IMR-90 (cell line): ENCODE measurements at regions of chr10 and their contacts with region 1.

Region 1: DNA sequence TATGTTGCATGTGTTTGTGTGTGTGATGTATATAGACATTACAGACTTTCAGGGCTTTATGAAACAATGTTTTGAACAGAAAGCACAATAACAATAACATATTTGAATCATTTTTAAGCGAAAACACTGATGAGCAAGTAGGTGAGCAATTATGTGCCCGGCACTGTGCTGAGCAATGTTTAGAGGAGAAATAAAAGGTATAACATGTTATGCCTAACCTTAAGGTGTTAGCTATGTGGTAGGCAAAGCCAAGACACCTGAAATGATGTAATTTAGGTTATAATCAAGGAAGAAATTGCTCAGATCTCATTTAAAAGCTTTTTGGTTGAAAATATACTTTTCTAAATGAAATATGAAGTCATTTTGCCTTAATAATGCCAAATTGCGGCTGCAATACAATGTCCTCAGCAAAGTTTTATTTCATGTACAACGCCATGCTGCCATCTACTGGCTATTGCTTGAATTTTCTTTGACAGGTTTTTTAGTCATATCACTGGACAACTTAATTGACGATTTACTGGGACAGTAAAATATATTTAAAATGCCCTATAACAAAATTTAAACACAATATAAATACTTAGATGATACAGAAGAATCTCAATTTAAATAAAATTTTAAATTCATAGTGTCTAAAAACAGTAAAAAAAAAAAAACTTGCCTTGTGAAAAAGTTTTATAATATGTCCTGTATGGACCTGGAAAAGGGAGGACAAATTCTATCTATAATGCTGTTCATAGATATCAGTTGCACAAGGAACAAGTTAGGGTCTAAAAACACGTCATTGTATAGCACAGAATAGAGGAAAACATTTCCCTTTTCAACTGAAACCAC is 131.1 kb upstream of the CDK1 start:
- DNase-seq: peak; percentile 69
- ATAC-seq: peak; percentile 67
- H3K4me3 ChIP-seq: no peak overlapping the region
- H3K27ac ChIP-seq: no peak overlapping the region
- H3K4me1 ChIP-seq: no peaks in the 10 kb centered on the region
- H3K27me3 ChIP-seq: peaks cover 1% of the 10 kb centered on the region; the same call in 1 of the 2 replicates
- CTCF ChIP-seq: peak; percentile 82
- POLR2A ChIP-seq: no peak
- RAD21 ChIP-seq: peak; percentile 83

Region 2: GRCh38 chr10:60099998-60100747 is 547.0 kb before region 1 on chr10:
- CTCF ChIA-PET with region 1: no interaction called
- POLR2A ChIA-PET with region 1: no interaction called
- dilution Hi-C with region 1: no loop called
- in situ Hi-C with region 1: loop called (anchors 25 kb)
- intact Hi-C with region 1: loop called (anchors 2 kb)
- DNase-seq: peak; percentile 63
- ATAC-seq: peak; percentile 63
- H3K4me3 ChIP-seq: no peak overlapping the region
- H3K27ac ChIP-seq: no peak overlapping the region
- H3K4me1 ChIP-seq: peaks cover 1% of the 10 kb centered on the region; the same call in 1 of the 2 replicates
- H3K27me3 ChIP-seq: peaks cover 1% of the 10 kb centered on the region; the same call in 1 of the 2 replicates
- CTCF ChIP-seq: peak; percentile 69
- POLR2A ChIP-seq: no peak
- RAD21 ChIP-seq: peak; percentile 73

Region 3: DNA sequence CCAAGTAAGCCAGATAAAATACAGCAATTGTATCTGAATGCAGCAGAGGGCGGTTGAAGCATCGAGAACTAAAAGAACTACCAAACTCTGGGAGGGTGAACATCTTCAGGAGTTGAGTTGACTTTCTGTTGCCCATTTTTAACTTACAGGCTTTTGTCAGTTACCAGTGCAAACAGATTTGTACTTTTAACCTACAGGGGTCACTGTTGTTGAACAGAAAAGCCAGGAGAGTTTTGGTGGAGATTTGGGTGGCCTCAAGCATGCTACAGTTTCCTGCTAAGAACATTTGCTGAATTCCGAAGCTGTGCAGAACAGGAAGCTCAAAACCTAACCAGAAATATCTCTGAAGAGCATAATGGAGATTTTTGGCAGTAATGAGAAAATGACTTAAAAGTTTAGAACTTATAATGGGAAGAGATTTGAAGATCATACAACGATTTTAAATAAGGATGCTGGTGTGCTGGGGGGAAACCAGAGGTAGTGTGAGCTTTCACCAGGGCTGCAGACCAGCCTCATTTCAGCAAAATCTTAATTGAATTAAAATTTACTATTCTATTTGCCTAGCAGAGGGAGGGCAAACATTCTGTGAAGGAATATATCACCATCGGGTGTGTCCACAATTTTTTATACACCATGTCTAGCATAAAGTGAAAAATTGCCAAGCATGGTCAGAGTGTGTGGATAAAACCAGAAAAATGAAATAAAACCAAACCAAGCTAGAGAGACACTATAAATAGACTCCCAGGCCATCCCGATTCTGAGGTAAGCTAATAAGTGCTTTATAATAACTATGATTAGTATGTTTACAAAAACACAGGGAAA is 532.2 kb before region 1 on chr10:
- CTCF ChIA-PET with region 1: no interaction called
- POLR2A ChIA-PET with region 1: no interaction called
- dilution Hi-C with region 1: no loop called
- in situ Hi-C with region 1: loop called (anchors 25 kb)
- intact Hi-C with region 1: no loop called
- DNase-seq: peak; percentile 69
- ATAC-seq: peak; percentile 70
- H3K4me3 ChIP-seq: no peak overlapping the region
- H3K27ac ChIP-seq: no peak overlapping the region
- H3K4me1 ChIP-seq: no peaks in the 10 kb centered on the region
- H3K27me3 ChIP-seq: no peaks in the 10 kb centered on the region; the same call in 1 of the 2 replicates
- CTCF ChIP-seq: peak; percentile 57
- POLR2A ChIP-seq: no peak
- RAD21 ChIP-seq: peak; percentile 64

Region 4: DNA sequence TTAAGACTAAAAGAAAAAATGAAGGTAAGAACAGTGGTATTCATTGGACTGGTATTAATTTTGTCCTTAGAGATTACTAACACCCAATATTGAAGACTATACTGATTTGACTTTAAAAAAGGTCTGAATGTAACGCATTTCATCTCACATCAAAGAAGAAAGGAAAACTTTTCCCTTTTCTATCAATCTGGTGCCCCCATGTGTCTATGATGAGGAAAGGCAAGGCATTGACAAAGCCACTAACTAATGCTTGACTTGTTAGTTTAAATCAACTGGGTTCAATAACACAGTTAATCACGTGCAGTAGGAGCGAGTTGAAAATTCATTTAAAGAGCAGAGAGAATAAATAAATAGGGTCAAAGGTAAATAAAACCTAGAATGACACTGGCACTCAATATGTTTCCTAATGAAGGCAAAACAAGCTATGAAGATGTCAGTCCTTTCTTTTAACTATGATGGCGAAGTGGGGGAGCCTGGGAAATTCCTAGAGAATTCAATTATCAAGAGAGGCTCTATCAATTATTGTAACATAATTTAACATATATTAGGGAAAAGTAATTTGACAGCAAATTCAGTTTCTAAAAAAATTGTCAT is 438.4 kb before region 1 on chr10:
- CTCF ChIA-PET with region 1: interaction called, 4 read pairs
- POLR2A ChIA-PET with region 1: no interaction called
- dilution Hi-C with region 1: no loop called
- in situ Hi-C with region 1: no loop called
- intact Hi-C with region 1: loop called (anchors 10 kb)
- DNase-seq: peak; percentile 49
- ATAC-seq: peak; percentile 59
- H3K4me3 ChIP-seq: no peak overlapping the region
- H3K27ac ChIP-seq: no peak overlapping the region
- H3K4me1 ChIP-seq: no peaks in the 10 kb centered on the region
- H3K27me3 ChIP-seq: peaks cover 15% of the 10 kb centered on the region
- CTCF ChIP-seq: peak; percentile 83
- POLR2A ChIP-seq: no peak
- RAD21 ChIP-seq: peak; percentile 80

Region 5: GRCh38 chr10:60237977-60238758 is 409.0 kb before region 1 on chr10:
- CTCF ChIA-PET with region 1: no interaction called
- POLR2A ChIA-PET with region 1: interaction called, 3 read pairs
- dilution Hi-C with region 1: no loop called
- in situ Hi-C with region 1: no loop called
- intact Hi-C with region 1: loop called (anchors 5 kb)
- DNase-seq: peak; percentile 70
- ATAC-seq: peak; percentile 99
- H3K4me3 ChIP-seq: no peak overlapping the region
- H3K27ac ChIP-seq: no peak overlapping the region
- H3K4me1 ChIP-seq: no peaks in the 10 kb centered on the region; the same call in 1 of the 2 replicates
- H3K27me3 ChIP-seq: no peaks in the 10 kb centered on the region
- CTCF ChIP-seq: peak; percentile 56
- POLR2A ChIP-seq: no peak
- RAD21 ChIP-seq: peak; percentile 70

Region 6: GRCh38 chr10:60444494-60445064 is 202.6 kb before region 1 on chr10:
- CTCF ChIA-PET with region 1: interaction called, 35 read pairs
- POLR2A ChIA-PET with region 1: no interaction called
- dilution Hi-C with region 1: no loop called
- in situ Hi-C with region 1: loop called (anchors 5 kb)
- intact Hi-C with region 1: loop called (anchors 1 kb)
- DNase-seq: peak; percentile 63
- ATAC-seq: peak; percentile 65
- H3K4me3 ChIP-seq: no peak overlapping the region
- H3K27ac ChIP-seq: no peak overlapping the region
- H3K4me1 ChIP-seq: peaks cover 3% of the 10 kb centered on the region; the same call in 1 of the 2 replicates
- H3K27me3 ChIP-seq: no peaks in the 10 kb centered on the region; the same call in 1 of the 2 replicates
- CTCF ChIP-seq: peak; percentile 72
- POLR2A ChIP-seq: no peak
- RAD21 ChIP-seq: peak; percentile 70

Region 7: GRCh38 chr10:60769406-60769805 is 122.2 kb after region 1 on chr10:
- CTCF ChIA-PET with region 1: interaction called, 9 read pairs
- POLR2A ChIA-PET with region 1: no interaction called
- dilution Hi-C with region 1: no loop called
- in situ Hi-C with region 1: no loop called
- intact Hi-C with region 1: loop called (anchors 2 kb)
- DNase-seq: no peak
- ATAC-seq: no peak
- H3K4me3 ChIP-seq: no peak overlapping the region
- H3K27ac ChIP-seq: no peak overlapping the region
- H3K4me1 ChIP-seq: no peaks in the 10 kb centered on the region
- H3K27me3 ChIP-seq: peaks cover 4% of the 10 kb centered on the region
- CTCF ChIP-seq: no peak
- POLR2A ChIP-seq: no peak
- RAD21 ChIP-seq: no peak